GM10248 (cell line): ENCODE measurements at regions of chr2 and their contacts with region 1.

Region 1: DNA sequence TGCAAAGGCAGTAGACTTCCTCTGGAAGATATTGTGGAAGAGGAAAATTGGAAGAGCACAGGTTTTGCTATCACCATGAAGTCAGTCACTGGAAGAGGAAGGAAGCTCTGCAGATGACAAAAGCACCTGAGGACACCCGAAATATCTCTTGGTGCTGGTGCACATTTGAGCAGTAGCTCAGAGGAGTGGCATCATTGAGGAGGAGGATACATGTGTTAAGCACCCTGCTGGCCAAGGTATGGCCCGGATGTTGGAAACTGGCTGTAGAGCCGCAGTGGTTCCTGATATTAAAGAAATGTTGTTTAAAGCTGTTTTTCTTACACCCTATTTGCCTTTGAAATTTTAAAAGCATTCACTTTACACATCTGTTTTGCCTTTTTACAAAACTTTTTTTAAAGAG is 32.7 kb upstream of the SCYGR2 start:
- DNase-seq: no peak
- CTCF ChIP-seq: no peak

Region 2: DNA sequence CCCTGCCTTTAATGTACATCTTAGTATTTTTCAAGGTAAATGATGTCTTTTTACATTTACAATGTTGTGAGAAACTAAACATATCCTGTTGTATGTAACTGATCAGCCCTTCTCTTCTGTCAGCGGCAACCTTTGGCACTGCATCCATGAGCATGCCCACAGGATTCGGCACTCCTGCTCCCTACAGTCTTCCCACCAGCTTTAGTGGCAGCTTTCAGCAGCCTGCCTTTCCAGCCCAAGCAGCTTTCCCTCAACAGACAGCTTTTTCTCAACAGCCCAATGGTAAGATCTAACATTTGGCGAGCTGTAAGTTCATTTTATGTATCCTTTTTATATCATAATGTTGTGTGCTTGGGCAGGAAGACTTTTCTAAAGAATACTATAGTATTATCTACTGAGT is 14.2 kb before region 1 on chr2:
- CTCF ChIA-PET with region 1: interaction called, 20 read pairs
- POLR2A ChIA-PET with region 1: no interaction called
- DNase-seq: no peak
- CTCF ChIP-seq: no peak